T-cell (primary cell): ENCODE measurements at regions of chr2 and their contacts with region 1.

Region 1: DNA sequence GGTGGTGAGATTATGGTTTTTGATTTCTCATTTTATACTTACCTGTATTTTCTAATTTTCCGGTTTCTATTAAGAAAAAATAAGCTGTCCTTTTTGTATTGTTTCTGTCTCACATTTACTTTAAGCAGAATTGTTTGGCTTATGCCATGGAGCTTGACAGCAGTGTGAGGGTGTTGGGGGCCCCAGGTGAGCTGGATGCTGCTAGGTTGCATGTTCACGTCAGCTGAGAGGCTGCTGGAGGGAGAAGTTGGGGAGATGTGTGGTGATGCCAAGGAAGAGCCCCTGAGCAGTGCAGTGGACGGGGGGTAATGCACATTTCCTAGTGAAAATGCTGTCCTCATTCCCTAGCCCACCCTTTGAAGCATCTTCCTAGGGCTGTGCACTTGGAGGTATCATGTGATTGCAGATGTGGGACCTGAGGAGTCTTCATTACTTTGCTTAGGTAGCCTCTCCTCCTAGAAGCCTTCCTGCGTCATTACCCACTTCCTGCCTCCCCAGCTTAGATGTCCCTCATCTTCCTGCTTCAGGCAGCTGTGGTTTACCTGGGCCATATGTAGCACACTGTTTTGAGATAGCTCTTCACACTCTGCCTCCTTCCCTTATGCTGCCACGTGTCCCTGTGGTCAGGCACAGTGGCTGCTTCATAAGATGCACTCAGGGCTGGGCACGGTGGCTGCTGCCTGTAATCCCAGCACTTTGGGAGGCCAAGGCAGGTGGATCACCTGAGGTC is 16.2 kb downstream of the ATG16L1 start:
- DNase-seq: peak; percentile 65 to 95 (median 86)
- ATAC-seq: peak; percentile 94 to 97 (median 96)
- H3K4me3 ChIP-seq: no peak overlapping the region
- H3K4me3 Mint-ChIP-seq: peak overlapping the region; percentile 51 to 67 (median 67)
- H3K27ac ChIP-seq: peak overlapping the region; percentile 89
- H3K27ac Mint-ChIP-seq: peak overlapping the region; percentile 100
- H3K4me1 ChIP-seq: peaks cover 45 to 48% of the 10 kb centered on the region in 2 experiments
- H3K4me1 Mint-ChIP-seq: peaks cover 69 to 76% (median 74%) of the 10 kb centered on the region in 3 donors
- H3K27me3 ChIP-seq: no peaks in the 10 kb centered on the region
- H3K27me3 Mint-ChIP-seq: no peaks in the 10 kb centered on the region

Region 2: GRCh38 chr2:233053928-233054784 is 213.5 kb before region 1 on chr2:
- CTCF ChIA-PET with region 1: no interaction called
- POLR2A ChIA-PET with region 1: interaction called in 1 of 2 experiments, 10 read pairs
- DNase-seq: peak in 31 of 35 experiments; percentile 35 to 82 (median 57)
- ATAC-seq: peak; percentile 70 to 79 (median 78)
- H3K4me3 ChIP-seq: no peak overlapping the region
- H3K4me3 Mint-ChIP-seq: peak overlapping the region in 1 of 3 donors; percentile 15
- H3K27ac ChIP-seq: no peak overlapping the region
- H3K27ac Mint-ChIP-seq: peak overlapping the region in 1 of 2 donors; percentile 21
- H3K4me1 ChIP-seq: peaks cover 0 to 30% of the 10 kb centered on the region in 2 experiments
- H3K4me1 Mint-ChIP-seq: peaks cover 13 to 24% (median 20%) of the 10 kb centered on the region in 3 donors
- H3K27me3 ChIP-seq: peaks cover 0 to 4% of the 10 kb centered on the region in 2 experiments
- H3K27me3 Mint-ChIP-seq: no peaks in the 10 kb centered on the region

Region 3: DNA sequence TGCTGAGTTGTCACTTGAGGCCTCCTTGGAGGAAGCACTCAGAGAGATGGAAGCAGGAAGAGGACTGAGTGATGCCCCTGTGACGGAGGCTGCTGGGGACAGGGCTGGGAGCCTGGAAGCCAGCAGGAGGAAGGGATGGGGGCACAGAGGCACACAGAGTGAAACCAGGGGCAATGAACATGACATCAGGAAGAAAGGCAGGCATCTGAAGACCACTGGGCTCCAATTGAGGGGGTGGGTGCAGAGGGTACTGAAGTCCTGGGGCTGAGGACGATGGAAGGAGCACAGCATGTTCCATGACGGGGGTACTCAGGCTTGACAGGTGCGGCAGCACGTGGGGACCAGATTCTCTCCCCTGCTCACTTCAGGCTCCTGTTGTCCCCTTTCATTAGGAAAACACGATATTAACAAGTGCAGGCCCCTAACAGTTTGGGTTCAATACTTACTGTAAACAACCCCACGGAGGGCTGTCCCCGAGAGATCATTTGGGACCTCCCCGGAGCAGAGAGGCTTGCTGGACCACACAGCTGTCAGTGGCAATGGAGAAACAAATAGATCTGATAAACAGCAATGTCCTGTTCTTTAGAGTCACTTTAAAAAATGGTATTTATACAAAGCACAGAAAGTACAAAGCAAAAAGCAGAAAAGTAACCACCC is 198.8 kb before region 1 on chr2:
- CTCF ChIA-PET with region 1: no interaction called
- POLR2A ChIA-PET with region 1: no interaction called
- DNase-seq: no peak
- ATAC-seq: no peak
- H3K4me3 ChIP-seq: no peak overlapping the region
- H3K4me3 Mint-ChIP-seq: peak overlapping the region in 2 of 3 donors; percentile 21 to 49
- H3K27ac ChIP-seq: peak overlapping the region; percentile 1
- H3K27ac Mint-ChIP-seq: peak overlapping the region; percentile 81 to 82
- H3K4me1 ChIP-seq: peaks cover 10 to 67% of the 10 kb centered on the region in 2 experiments
- H3K4me1 Mint-ChIP-seq: peaks cover 70 to 77% (median 77%) of the 10 kb centered on the region in 3 donors
- H3K27me3 ChIP-seq: no peaks in the 10 kb centered on the region
- H3K27me3 Mint-ChIP-seq: no peaks in the 10 kb centered on the region

Region 4: DNA sequence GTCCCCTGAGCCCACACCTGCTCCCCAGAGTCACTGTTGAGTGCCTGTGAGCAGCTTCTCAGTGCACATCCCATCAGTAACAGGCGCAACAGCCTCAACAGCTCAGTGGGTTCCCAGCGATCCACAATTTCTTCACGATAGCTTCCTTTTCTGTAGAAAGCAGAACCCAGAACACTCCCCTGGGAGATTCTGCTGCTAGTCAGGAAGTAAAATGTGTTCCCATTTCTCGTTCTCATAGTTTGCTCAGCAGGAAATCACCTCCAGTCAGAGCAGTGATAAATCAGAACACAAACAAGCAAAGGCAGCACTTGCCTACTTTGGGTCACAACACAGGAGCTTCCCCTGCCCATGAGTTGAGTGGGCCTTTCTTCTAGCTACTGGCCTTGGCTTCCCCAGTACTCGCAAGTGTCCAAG is 65.1 kb before region 1 on chr2:
- CTCF ChIA-PET with region 1: no interaction called
- POLR2A ChIA-PET with region 1: no interaction called
- DNase-seq: no peak
- ATAC-seq: no peak
- H3K4me3 ChIP-seq: no peak overlapping the region
- H3K4me3 Mint-ChIP-seq: no peak overlapping the region
- H3K27ac ChIP-seq: no peak overlapping the region
- H3K27ac Mint-ChIP-seq: no peak overlapping the region
- H3K4me1 ChIP-seq: peaks cover 0 to 5% of the 10 kb centered on the region in 2 experiments
- H3K4me1 Mint-ChIP-seq: peaks cover 0 to 5% (median 1%) of the 10 kb centered on the region in 3 donors
- H3K27me3 ChIP-seq: no peaks in the 10 kb centered on the region
- H3K27me3 Mint-ChIP-seq: no peaks in the 10 kb centered on the region

Region 5: GRCh38 chr2:233251306-233252116 is 16.2 kb before region 1 on chr2 and contains the start of gene ATG16L1:
- CTCF ChIA-PET with region 1: interaction called in 1 of 2 experiments, 13 read pairs
- POLR2A ChIA-PET with region 1: interaction called, 4 to 18 read pairs
- DNase-seq: peak; percentile 86 to 98 (median 95)
- ATAC-seq: peak; percentile 91 to 96 (median 92)
- H3K4me3 ChIP-seq: peak within 1 kb of the TSS; percentile 94 to 97
- H3K4me3 Mint-ChIP-seq: peak within 1 kb of the TSS; percentile 87 to 92 (median 92)
- H3K27ac ChIP-seq: peak within 1 kb of the TSS; percentile 85
- H3K27ac Mint-ChIP-seq: peak within 1 kb of the TSS; percentile 94 to 97
- H3K4me1 ChIP-seq: peaks cover 43 to 58% of the 10 kb centered on the region in 2 experiments
- H3K4me1 Mint-ChIP-seq: peaks cover 71 to 77% (median 76%) of the 10 kb centered on the region in 3 donors
- H3K27me3 ChIP-seq: no peaks in the 10 kb centered on the region
- H3K27me3 Mint-ChIP-seq: no peaks in the 10 kb centered on the region
- total RNA-seq, gene ATG16L1: 73.9 to 117 (median 83.4) TPM